ENCODE measurements at regions of chr11 and their contacts with region 1.

Region 1: GRCh38 chr11:123062158-123062891 is 389 bp upstream of the HSPA8 start:
- DNase-seq: peak; percentile 100
- H3K4me3 ChIP-seq: peak overlapping the region; percentile 66 to 95 (median 91)
- H3K27ac ChIP-seq: peak overlapping the region; percentile 96
- H3K4me1 ChIP-seq: peaks cover 29% of the 10 kb centered on the region
- H3K27me3 ChIP-seq: no peaks in the 10 kb centered on the region
- CTCF ChIP-seq: no peak
- POLR2A ChIP-seq: no peak

Region 2: GRCh38 chr11:122167100-122167499 is 895.2 kb before region 1 on chr11:
- CTCF ChIA-PET with region 1: no interaction called
- POLR2A ChIA-PET with region 1: interaction called, 11 read pairs
- dilution Hi-C with region 1: no loop called
- intact Hi-C with region 1: no loop called
- DNase-seq: peak; percentile 83
- H3K4me3 ChIP-seq: no peak overlapping the region
- H3K27ac ChIP-seq: peak overlapping the region; percentile 74
- H3K4me1 ChIP-seq: peaks cover 58% of the 10 kb centered on the region
- H3K27me3 ChIP-seq: no peaks in the 10 kb centered on the region
- CTCF ChIP-seq: no peak
- POLR2A ChIP-seq: no peak

Region 3: DNA sequence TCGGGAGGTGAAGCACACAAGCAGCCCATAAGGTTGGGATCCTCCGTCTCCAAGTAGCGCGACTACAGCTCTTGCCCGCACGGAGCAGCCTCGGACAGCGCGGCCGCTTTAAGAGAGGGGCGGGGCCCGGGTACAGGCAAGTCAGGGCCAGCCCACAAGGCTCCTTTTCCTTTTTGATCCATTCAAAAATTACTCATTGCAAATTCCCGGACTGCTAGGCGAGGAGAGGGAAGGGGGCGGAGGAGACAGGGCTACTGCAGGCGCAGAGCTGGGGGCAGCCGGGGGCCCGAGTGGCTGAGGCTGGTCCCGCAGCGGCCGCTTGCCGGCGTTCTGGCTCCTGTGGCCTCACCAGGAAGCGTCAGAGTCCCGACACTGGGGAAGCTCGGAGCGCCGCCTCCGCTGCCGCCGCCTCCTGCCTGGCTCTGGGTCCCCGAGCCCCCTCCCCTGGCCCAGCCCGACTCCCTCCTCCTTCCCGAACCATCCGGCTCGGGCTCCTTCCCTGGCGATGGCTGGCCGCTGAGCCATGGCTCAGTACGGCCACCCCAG is 406.7 kb before region 1 on chr11 and contains the start of gene UBASH3B:
- CTCF ChIA-PET with region 1: no interaction called
- POLR2A ChIA-PET with region 1: interaction called, 3 read pairs
- dilution Hi-C with region 1: no loop called
- intact Hi-C with region 1: loop called (anchors 5 kb)
- DNase-seq: peak; percentile 90
- H3K4me3 ChIP-seq: peak within 1 kb of the TSS; percentile 47 to 74 (median 62)
- H3K27ac ChIP-seq: peak within 1 kb of the TSS; percentile 83
- H3K4me1 ChIP-seq: peaks cover 17% of the 10 kb centered on the region
- H3K27me3 ChIP-seq: no peaks in the 10 kb centered on the region
- CTCF ChIP-seq: no peak
- POLR2A ChIP-seq: peak; percentile 96
- total RNA-seq, gene UBASH3B: 38.1 and 38.8 TPM in 2 replicates

Region 4: GRCh38 chr11:122882857-122883645 is 179.3 kb before region 1 on chr11:
- CTCF ChIA-PET with region 1: no interaction called
- POLR2A ChIA-PET with region 1: no interaction called
- dilution Hi-C with region 1: no loop called
- intact Hi-C with region 1: loop called (anchors 2 kb)
- DNase-seq: peak; percentile 50
- H3K4me3 ChIP-seq: peak overlapping the region; percentile 58 to 72 (median 71)
- H3K27ac ChIP-seq: peak overlapping the region; percentile 66
- H3K4me1 ChIP-seq: peaks cover 8% of the 10 kb centered on the region
- H3K27me3 ChIP-seq: peaks cover 2 to 4% of the 10 kb centered on the region in 2 experiments
- CTCF ChIP-seq: no peak
- POLR2A ChIP-seq: peak; percentile 53

Region 5: GRCh38 chr11:122998727-122999366 is 63.5 kb before region 1 on chr11:
- CTCF ChIA-PET with region 1: no interaction called
- POLR2A ChIA-PET with region 1: no interaction called
- dilution Hi-C with region 1: no loop called
- intact Hi-C with region 1: no loop called
- DNase-seq: no peak
- H3K4me3 ChIP-seq: no peak overlapping the region
- H3K27ac ChIP-seq: no peak overlapping the region
- H3K4me1 ChIP-seq: no peaks in the 10 kb centered on the region
- H3K27me3 ChIP-seq: peaks cover 5 to 7% of the 10 kb centered on the region in 2 experiments
- CTCF ChIP-seq: no peak
- POLR2A ChIP-seq: no peak

Region 6: GRCh38 chr11:123116486-123116885 is 54.2 kb after region 1 on chr11:
- CTCF ChIA-PET with region 1: no interaction called
- POLR2A ChIA-PET with region 1: interaction called, 5 read pairs
- dilution Hi-C with region 1: no loop called
- intact Hi-C with region 1: loop called (anchors 5 kb)
- DNase-seq: no peak
- H3K4me3 ChIP-seq: no peak overlapping the region
- H3K27ac ChIP-seq: no peak overlapping the region
- H3K4me1 ChIP-seq: peaks cover 3% of the 10 kb centered on the region
- H3K27me3 ChIP-seq: no peaks in the 10 kb centered on the region
- CTCF ChIP-seq: no peak
- POLR2A ChIP-seq: no peak

Region 7: DNA sequence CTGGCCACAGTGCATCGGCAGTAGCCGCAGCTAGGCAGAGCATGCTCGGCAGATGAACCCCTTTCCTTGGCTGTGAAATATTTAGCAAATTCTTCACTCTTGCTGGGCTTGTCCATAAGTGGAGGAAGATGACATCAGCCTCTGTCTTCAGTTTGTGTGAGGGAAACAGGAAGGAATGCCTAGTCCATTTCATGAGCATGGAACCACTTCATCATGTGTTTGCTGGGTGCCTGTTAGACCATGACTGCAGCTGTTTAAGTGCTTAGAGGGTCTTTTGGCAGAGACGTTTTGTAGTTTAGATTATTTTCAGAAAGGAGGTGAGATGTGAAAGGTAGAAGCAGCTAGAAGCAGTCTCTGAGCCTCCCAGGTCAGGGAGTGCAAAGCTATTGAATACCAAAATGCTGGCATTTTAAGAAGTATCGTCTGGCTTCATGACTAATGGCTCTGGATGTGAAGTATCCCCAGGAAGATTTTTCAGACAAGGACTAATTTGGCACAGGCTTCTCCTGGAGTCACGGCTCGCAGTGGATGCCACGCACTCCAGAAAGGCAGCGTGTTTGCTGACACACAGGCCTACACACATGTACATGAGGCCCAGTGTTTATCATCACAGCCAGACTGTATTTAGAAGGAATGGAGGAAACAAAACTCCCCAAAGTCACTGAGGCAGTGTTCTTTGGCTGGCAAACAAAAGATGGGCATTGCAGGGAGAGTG is 324.6 kb after region 1 on chr11:
- CTCF ChIA-PET with region 1: no interaction called
- POLR2A ChIA-PET with region 1: no interaction called
- dilution Hi-C with region 1: no loop called
- intact Hi-C with region 1: no loop called
- DNase-seq: no peak
- H3K4me3 ChIP-seq: no peak overlapping the region
- H3K27ac ChIP-seq: no peak overlapping the region
- H3K4me1 ChIP-seq: no peaks in the 10 kb centered on the region
- H3K27me3 ChIP-seq: peaks cover 3 to 5% of the 10 kb centered on the region in 2 experiments
- CTCF ChIP-seq: no peak
- POLR2A ChIP-seq: no peak

Region 8: GRCh38 chr11:123478352-123478987 is 416.1 kb after region 1 on chr11:
- CTCF ChIA-PET with region 1: no interaction called
- POLR2A ChIA-PET with region 1: no interaction called
- dilution Hi-C with region 1: no loop called
- intact Hi-C with region 1: loop called (anchors 1 kb)
- DNase-seq: peak; percentile 76
- H3K4me3 ChIP-seq: no peak overlapping the region
- H3K27ac ChIP-seq: no peak overlapping the region
- H3K4me1 ChIP-seq: peaks cover 25% of the 10 kb centered on the region
- H3K27me3 ChIP-seq: no peaks in the 10 kb centered on the region
- CTCF ChIP-seq: peak; percentile 54 to 58
- POLR2A ChIP-seq: no peak

Region 9: GRCh38 chr11:123580557-123581275 is 518.4 kb after region 1 on chr11:
- CTCF ChIA-PET with region 1: no interaction called
- POLR2A ChIA-PET with region 1: no interaction called
- dilution Hi-C with region 1: no loop called
- intact Hi-C with region 1: no loop called
- DNase-seq: peak; percentile 49
- H3K4me3 ChIP-seq: no peak overlapping the region
- H3K27ac ChIP-seq: no peak overlapping the region
- H3K4me1 ChIP-seq: peaks cover 5% of the 10 kb centered on the region
- H3K27me3 ChIP-seq: peaks cover 2 to 4% of the 10 kb centered on the region in 2 experiments
- CTCF ChIP-seq: peak; percentile 91 to 98
- POLR2A ChIP-seq: no peak